Left cardiac atrium (tissue), 4 donors: ENCODE measurements at regions of chr4 and their contacts with region 1.

Region 1: GRCh38 chr4:88659055-88659889 is 38.4 kb downstream of the NAP1L5 start:
- DNase-seq: peak; percentile 56
- ATAC-seq: peak; percentile 96

Region 2: DNA sequence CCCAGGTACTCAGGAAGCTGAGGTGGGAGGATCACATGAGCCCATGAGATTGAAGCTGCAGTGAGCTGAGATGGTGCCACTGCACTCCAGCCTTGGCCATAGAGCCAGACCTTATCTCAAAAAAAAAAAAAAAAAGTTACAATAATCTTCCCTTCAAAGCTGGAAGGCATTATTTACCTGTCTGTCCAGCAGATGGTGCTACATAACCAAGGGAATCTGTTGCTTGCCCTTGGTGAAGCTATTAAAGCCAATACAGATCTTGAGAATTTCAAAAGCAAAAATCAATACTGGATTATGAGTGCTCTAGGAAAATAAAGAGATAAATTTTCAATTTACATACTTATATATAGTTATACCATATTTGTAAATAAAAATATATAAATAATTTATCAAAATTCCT is 626.0 kb before region 1 on chr4:
- intact Hi-C with region 1: no loop called
- DNase-seq: no peak
- ATAC-seq: peak in 1 of 2 donors; percentile 51

Region 3: GRCh38 chr4:88419874-88420273 is 239.4 kb before region 1 on chr4:
- intact Hi-C with region 1: no loop called
- DNase-seq: no peak
- ATAC-seq: no peak

Region 4: GRCh38 chr4:88533937-88534750 is 125.1 kb before region 1 on chr4:
- intact Hi-C with region 1: loop called (anchors 1 to 5 kb)
- DNase-seq: no peak
- ATAC-seq: peak in 1 of 2 donors; percentile 15

Region 5: DNA sequence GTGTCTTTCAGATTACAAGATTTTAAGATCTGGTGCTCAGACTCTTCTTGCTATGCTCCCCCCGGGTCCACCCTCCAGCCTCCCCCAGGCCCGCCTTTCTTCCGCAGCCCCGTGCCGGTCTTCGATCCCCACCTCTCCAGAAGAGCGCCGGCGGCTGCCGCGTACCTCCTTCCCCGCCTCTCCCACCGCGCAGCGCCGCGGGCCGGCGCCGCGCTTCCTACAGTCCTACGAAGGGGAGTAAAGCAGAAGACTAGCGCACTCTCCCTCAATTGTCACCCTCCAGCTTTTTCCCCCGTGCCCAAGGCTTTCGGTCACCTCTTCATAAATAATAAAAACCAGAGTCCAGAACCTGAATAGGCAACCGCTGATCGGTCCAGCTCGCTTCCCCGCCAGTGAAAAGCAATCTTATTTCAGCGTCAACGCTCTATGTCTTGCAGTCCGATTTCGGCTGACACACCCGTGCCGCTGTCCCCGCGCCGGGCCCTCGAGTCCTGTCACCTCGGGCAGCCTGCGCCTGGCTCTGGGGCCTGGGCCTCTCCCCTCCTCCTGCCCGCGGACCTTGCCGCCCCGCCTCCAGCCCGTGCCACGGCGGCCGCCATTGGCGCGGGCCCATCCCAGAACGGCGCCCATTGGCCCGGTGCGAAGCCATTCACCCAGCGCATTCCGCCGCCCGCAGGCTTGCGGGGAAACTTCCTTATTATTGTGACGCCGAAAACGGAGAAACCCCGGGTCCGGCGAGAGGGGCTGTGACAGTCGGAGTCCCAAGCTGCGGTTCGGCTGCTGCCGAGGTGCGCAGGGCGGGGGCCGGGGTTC is 67.3 kb before region 1 on chr4 and contains the start of gene HERC3:
- intact Hi-C with region 1: loop called in 1 of 2 experiments (anchors 10 kb)
- DNase-seq: peak; percentile 93
- ATAC-seq: peak; percentile 99
- total RNA-seq, gene HERC3: 41.9 to 45.9 TPM